Mammary epithelial cell (primary cell): ENCODE measurements at regions of chr2 and their contacts with region 1.

Region 1: DNA sequence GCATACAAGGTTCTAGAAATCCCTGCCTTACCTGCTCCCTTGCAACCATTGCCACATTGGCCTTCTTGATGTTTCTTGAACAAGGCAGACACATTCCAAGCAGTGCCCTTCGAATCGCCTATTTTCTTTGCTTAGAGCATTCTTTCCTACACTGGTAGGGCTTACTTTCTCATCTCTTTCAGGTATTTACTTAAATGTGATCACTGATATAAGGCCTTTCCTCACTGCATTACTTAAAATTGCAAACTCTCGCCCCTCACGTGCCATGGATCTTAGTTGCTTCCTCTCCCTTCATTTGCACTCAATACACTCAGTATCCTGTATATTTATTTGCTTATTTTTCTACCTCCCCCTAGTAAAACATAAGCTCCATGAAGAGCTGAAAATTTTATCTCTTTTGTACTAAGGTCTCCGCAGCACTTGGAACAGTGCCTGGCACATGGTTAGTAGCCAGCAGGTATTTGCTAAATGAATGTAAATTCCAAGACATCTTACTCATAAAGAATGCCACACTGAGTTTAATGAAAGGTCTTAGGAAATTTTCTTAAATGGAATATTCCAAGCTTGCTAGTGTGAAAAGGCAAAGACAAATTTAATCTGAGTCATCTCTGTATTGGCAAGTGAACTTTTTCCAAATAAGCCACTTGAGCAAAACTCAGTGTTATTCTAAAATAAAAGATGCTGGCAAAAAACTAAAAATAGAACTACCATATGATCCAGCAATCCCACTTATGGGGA is 42.4 kb upstream of the FIGN start:
- DNase-seq: peak; percentile 83
- H3K4me3 ChIP-seq: no peak overlapping the region
- H3K27ac ChIP-seq: peak overlapping the region; percentile 42
- H3K4me1 ChIP-seq: peaks cover 56% of the 10 kb centered on the region
- H3K27me3 ChIP-seq: no peaks in the 10 kb centered on the region
- CTCF ChIP-seq: no peak

Region 2: GRCh38 chr2:163658556-163658955 is 119.7 kb before region 1 on chr2:
- CTCF ChIA-PET with region 1: no interaction called
- dilution Hi-C with region 1: no loop called
- in situ Hi-C with region 1: no loop called
- intact Hi-C with region 1: loop called (anchors 2 kb)
- DNase-seq: peak; percentile 68
- H3K4me3 ChIP-seq: no peak overlapping the region
- H3K27ac ChIP-seq: peak overlapping the region; percentile 94
- H3K4me1 ChIP-seq: peaks cover 27% of the 10 kb centered on the region
- H3K27me3 ChIP-seq: no peaks in the 10 kb centered on the region
- CTCF ChIP-seq: no peak

Region 3: GRCh38 chr2:163735685-163736432 is 42.4 kb before region 1 on chr2 and contains the start of gene FIGN:
- CTCF ChIA-PET with region 1: no interaction called
- dilution Hi-C with region 1: no loop called
- in situ Hi-C with region 1: no loop called
- intact Hi-C with region 1: loop called (anchors 1 kb)
- DNase-seq: peak; percentile 77
- H3K4me3 ChIP-seq: peak within 1 kb of the TSS; percentile 93 to 100 (median 98)
- H3K27ac ChIP-seq: peak within 1 kb of the TSS; percentile 80
- H3K4me1 ChIP-seq: peaks cover 17% of the 10 kb centered on the region
- H3K27me3 ChIP-seq: no peaks in the 10 kb centered on the region
- CTCF ChIP-seq: no peak
- total RNA-seq, gene FIGN: 2.5 to 10.7 TPM

Region 4: GRCh38 chr2:163752267-163752666 is 25.9 kb before region 1 on chr2:
- CTCF ChIA-PET with region 1: no interaction called
- dilution Hi-C with region 1: no loop called
- in situ Hi-C with region 1: no loop called
- intact Hi-C with region 1: loop called (anchors 1 kb)
- DNase-seq: peak; percentile 63
- H3K4me3 ChIP-seq: no peak overlapping the region
- H3K27ac ChIP-seq: peak overlapping the region; percentile 51
- H3K4me1 ChIP-seq: peaks cover 27% of the 10 kb centered on the region
- H3K27me3 ChIP-seq: no peaks in the 10 kb centered on the region
- CTCF ChIP-seq: no peak